Sciatic nerve (tissue), 2 donors: ENCODE measurements at regions of chr2 and their contacts with region 1.

Region 1: DNA sequence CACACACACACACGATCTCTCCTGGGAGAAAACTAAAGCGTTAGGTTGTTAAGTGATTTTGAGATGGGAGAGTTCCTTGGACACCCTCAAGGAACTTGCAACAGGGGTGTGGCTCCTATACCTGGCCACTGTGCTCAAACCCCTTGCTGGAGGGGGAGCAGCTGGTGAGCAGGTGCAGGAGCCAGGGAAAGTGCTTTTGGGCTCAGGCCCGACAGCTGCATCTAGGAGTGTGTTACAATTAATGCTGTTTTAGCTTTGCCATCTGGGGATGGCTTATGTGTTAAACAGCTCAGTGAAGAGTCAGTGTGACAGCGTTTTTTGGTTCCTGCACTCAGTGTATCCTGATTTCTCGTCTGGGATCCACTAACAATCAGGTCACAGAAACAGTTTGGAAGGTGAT is 510.8 kb downstream of the TRIB2 start:
- DNase-seq: no peak
- ATAC-seq: no peak

Region 2: GRCh38 chr2:13826314-13826853 is 598.8 kb after region 1 on chr2:
- intact Hi-C with region 1: loop called (anchors 10 kb)
- DNase-seq: no peak
- ATAC-seq: no peak